ENCODE measurements at regions of chr10 and their contacts with region 1.

Region 1: DNA sequence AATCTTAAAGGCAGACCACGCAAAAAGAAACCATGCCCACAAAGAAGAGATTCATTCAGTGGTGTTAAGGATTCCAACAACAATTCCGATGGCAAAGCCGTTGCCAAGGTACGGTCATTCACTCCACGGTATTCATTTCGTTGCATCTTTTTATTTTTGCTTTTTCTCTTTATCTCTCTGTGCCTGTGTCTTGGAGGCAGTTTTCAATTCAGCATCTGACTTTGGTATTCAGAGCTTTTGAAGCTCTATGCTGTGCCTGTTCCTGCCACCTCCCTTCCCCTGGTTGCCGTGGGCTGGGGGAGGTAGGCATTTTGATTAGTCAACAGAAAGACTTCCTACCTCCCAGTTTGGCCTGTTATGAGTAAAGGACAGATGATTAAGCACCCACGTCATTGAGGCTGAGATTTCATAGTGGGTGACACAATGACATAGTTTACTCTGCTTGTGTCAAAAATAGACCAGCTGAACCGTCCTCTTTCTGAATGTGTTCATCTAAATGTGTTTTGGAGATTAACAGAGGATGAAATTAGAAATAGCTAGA is 149.5 kb downstream of the ARID5B start:
- DNase-seq: peak; percentile 93
- H3K4me3 Mint-ChIP-seq: peak overlapping the region; percentile 97
- H3K27ac Mint-ChIP-seq: peak overlapping the region; percentile 99
- H3K4me1 Mint-ChIP-seq: peaks cover 79% of the 10 kb centered on the region
- H3K27me3 Mint-ChIP-seq: no peaks in the 10 kb centered on the region

Region 2: DNA sequence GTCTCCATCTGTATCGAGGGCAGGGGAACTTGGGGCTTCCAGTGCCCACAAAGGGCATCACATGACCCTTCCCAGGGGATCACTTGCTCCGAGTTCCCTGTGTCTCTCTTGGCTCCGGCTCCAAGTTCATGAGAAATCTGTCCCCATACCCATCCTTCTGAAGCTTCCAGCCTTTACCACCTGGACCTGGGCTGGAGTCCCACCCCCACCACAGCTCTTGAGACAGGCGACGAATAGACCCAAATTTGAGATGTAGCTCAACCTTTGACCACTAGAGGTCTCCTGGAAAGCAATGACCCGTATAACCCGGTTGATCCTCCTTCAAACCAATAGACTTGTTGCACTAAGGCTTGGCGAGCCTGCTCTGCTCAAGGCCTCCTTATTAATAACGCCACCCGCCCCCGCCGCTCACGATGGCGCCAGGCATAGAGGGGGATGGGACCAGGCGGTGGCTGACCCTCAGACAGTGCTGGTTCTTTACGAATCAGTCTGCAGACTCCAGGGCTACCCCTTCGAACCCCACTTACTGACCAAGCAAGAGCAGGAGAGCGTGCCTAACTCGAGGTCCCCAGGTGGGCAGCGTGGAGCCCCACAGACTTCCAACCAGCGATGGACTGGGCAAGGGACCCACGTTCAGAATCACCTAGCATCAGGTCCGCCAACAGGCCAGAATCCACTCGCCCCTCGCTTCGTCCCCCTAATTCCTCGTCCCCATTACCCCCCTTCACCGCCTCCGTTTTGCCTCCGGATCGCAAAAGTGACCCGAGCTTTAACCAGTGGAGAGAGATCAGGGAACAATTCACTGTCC is 153.9 kb before region 1 on chr10:
- intact Hi-C with region 1: loop called (anchors 1 kb)
- DNase-seq: peak; percentile 91
- H3K4me3 Mint-ChIP-seq: peak overlapping the region; percentile 92
- H3K27ac Mint-ChIP-seq: peak overlapping the region; percentile 93
- H3K4me1 Mint-ChIP-seq: peaks cover 36% of the 10 kb centered on the region
- H3K27me3 Mint-ChIP-seq: no peaks in the 10 kb centered on the region

Region 3: DNA sequence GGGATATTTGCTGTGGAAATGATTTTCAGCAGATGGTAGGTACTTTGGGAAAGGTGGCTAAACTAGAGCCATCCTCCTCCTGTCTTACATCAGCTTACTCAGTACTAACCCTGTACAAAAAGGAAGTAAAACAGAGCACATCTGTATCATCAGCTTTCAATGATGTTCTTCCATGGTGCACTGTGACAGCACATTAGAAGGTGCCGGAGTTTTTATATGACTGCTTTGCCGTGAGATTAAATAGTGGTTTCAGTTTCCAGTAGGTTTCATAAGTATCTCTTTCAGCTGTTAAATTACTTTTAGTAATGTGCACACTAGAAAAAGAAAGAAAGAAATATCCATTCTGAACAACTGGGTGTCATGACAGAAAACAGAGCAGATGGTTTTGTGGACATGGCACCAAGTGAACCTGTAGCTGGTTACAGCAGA is 63.0 kb before region 1 on chr10:
- intact Hi-C with region 1: loop called (anchors 1 kb)
- DNase-seq: peak; percentile 84
- H3K4me3 Mint-ChIP-seq: peak overlapping the region; percentile 72
- H3K27ac Mint-ChIP-seq: peak overlapping the region; percentile 96
- H3K4me1 Mint-ChIP-seq: peaks cover 71% of the 10 kb centered on the region
- H3K27me3 Mint-ChIP-seq: no peaks in the 10 kb centered on the region

Region 4: GRCh38 chr10:62063795-62064472 is 13.0 kb after region 1 on chr10:
- intact Hi-C with region 1: loop called (anchors 1 kb)
- DNase-seq: peak; percentile 73
- H3K4me3 Mint-ChIP-seq: peak overlapping the region; percentile 69
- H3K27ac Mint-ChIP-seq: peak overlapping the region; percentile 84
- H3K4me1 Mint-ChIP-seq: peaks cover 69% of the 10 kb centered on the region
- H3K27me3 Mint-ChIP-seq: no peaks in the 10 kb centered on the region

Region 5: GRCh38 chr10:62437696-62438095 is 386.7 kb after region 1 on chr10:
- intact Hi-C with region 1: loop called (anchors 10 kb)
- DNase-seq: peak; percentile 79
- H3K4me3 Mint-ChIP-seq: no peak overlapping the region
- H3K27ac Mint-ChIP-seq: no peak overlapping the region
- H3K4me1 Mint-ChIP-seq: peaks cover 10% of the 10 kb centered on the region
- H3K27me3 Mint-ChIP-seq: peaks cover 30% of the 10 kb centered on the region

Region 6: GRCh38 chr10:62811159-62811875 is 760.4 kb after region 1 on chr10:
- intact Hi-C with region 1: loop called (anchors 1 kb)
- DNase-seq: peak; percentile 90
- H3K4me3 Mint-ChIP-seq: peak overlapping the region; percentile 97
- H3K27ac Mint-ChIP-seq: peak overlapping the region; percentile 100
- H3K4me1 Mint-ChIP-seq: peaks cover 67% of the 10 kb centered on the region
- H3K27me3 Mint-ChIP-seq: peaks cover 1% of the 10 kb centered on the region

Measured in activated CD4-positive, alpha-beta T cell treated with anti-CD3 and anti-CD28 coated beads, Interleukin-2, amount 10 ng/mL, durations not matched to agents 24 days and 14 days (primary cell).